ENCODE measurements at regions of chr7 and their contacts with region 1.

Region 1: GRCh38 chr7:138346975-138347374 is 113.1 kb upstream of the TRIM24 start:
- DNase-seq: no peak
- H3K4me3 ChIP-seq: no peak overlapping the region
- H3K4me3 Mint-ChIP-seq: no peak overlapping the region
- H3K27ac Mint-ChIP-seq: no peak overlapping the region
- H3K4me1 ChIP-seq: no peaks in the 10 kb centered on the region
- H3K4me1 Mint-ChIP-seq: no peaks in the 10 kb centered on the region
- H3K27me3 ChIP-seq: no peaks in the 10 kb centered on the region
- H3K27me3 Mint-ChIP-seq: no peaks in the 10 kb centered on the region
- CTCF ChIP-seq: no peak

Region 2: GRCh38 chr7:138097064-138097741 is 249.8 kb before region 1 on chr7:
- CTCF ChIA-PET with region 1: no interaction called
- POLR2A ChIA-PET with region 1: no interaction called
- intact Hi-C with region 1: loop called (anchors 1 kb)
- DNase-seq: peak; percentile 71 to 77
- H3K4me3 ChIP-seq: no peak overlapping the region
- H3K4me3 Mint-ChIP-seq: no peak overlapping the region
- H3K27ac Mint-ChIP-seq: peak overlapping the region; percentile 74
- H3K4me1 ChIP-seq: peaks cover 6% of the 10 kb centered on the region
- H3K4me1 Mint-ChIP-seq: peaks cover 12% of the 10 kb centered on the region
- H3K27me3 ChIP-seq: no peaks in the 10 kb centered on the region
- H3K27me3 Mint-ChIP-seq: no peaks in the 10 kb centered on the region
- CTCF ChIP-seq: peak; percentile 43

Region 3: DNA sequence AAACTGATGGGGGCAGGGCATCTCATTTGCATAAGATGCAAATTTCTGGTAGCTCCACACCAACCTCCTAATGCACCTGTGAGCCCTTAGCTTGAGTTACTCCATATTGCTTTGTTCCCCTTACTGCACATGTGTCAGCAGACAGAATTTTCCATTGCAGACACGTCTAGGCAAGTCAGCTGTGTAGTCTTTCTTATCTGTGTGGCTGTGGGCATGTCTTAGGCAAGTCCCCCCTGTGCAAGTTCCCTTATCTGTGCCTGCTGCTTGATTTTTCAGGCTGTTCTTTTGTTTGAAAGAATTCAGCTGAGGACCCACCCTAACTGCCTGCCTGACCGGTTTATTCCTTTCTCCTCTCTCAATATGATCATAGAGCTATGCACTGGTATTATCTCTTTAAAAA is 84.5 kb after region 1 on chr7:
- CTCF ChIA-PET with region 1: no interaction called
- POLR2A ChIA-PET with region 1: no interaction called
- intact Hi-C with region 1: no loop called
- DNase-seq: no peak
- H3K4me3 ChIP-seq: no peak overlapping the region
- H3K4me3 Mint-ChIP-seq: no peak overlapping the region
- H3K27ac Mint-ChIP-seq: no peak overlapping the region
- H3K4me1 ChIP-seq: no peaks in the 10 kb centered on the region
- H3K4me1 Mint-ChIP-seq: no peaks in the 10 kb centered on the region
- H3K27me3 ChIP-seq: no peaks in the 10 kb centered on the region
- H3K27me3 Mint-ChIP-seq: no peaks in the 10 kb centered on the region
- CTCF ChIP-seq: no peak